Activated T-helper 2 cell treated with anti-CD3 and anti-CD28 coated beads, Interferon-gamma antibody, Interleukin-2, Interleukin-4, amounts not matched to agents 10 μg/mL and 5 μg/mL and 100 μg/mL, durations not matched to agents 14 hours and 24 hours and 36 hours (primary cell): ENCODE measurements at regions of chr6 and their contacts with region 1.

Region 1: DNA sequence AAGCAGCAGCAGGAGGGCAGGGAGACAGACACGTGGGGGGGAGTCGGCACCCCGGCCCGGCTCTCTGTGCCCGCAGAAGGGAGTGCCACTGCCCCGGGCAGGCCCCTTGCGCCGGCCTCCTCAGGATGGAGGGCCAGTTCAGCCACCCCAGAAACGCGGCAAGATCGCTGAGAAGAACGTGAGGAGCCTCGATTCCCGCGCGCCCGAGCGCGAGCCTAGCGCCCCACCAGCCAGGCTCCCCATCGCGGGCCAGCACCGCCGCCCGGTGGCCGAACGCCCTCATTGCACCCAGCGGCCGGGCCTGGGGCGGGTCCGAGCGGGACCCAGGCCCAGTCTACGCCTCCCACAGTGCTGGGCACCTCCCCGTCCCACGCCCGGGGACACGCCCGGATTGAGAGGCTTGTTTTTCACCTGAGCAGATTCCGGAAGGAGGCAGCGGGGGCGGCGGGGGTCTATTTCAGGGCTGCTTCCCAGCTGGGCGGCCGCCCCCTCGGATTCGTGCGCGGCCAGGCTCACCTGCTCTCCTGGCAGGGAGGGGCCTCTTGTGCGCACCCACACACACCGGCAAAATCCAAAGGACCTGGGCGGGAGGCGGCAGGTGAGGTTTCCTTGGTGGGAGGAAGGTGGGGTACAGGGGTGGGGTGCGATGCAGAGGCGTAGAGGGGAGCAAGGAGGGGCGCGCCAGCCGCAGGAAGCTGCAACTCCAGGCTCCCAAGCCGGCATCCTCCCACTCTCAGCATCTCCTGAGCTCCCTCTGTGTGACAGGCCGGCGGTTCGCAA is 9.0 kb upstream of the GRM4 start:
- DNase-seq: peak; percentile 44
- H3K4me3 Mint-ChIP-seq: no peak overlapping the region
- H3K27ac Mint-ChIP-seq: no peak overlapping the region
- H3K4me1 Mint-ChIP-seq: no peaks in the 10 kb centered on the region
- H3K27me3 Mint-ChIP-seq: peaks cover 60% of the 10 kb centered on the region

Region 2: GRCh38 chr6:33579828-33580714 is 574.8 kb before region 1 on chr6 and contains the start of gene BAK1:
- intact Hi-C with region 1: no loop called
- DNase-seq: peak; percentile 81
- H3K4me3 Mint-ChIP-seq: peak within 1 kb of the TSS; percentile 96
- H3K27ac Mint-ChIP-seq: peak within 1 kb of the TSS; percentile 99
- H3K4me1 Mint-ChIP-seq: peaks cover 20% of the 10 kb centered on the region
- H3K27me3 Mint-ChIP-seq: no peaks in the 10 kb centered on the region
- total RNA-seq, gene BAK1: 53.2 and 53.4 TPM in 2 replicates

Region 3: GRCh38 chr6:34055223-34055933 is 99.5 kb before region 1 on chr6:
- intact Hi-C with region 1: loop called (anchors 2 kb)
- DNase-seq: peak; percentile 30
- H3K4me3 Mint-ChIP-seq: no peak overlapping the region
- H3K27ac Mint-ChIP-seq: no peak overlapping the region
- H3K4me1 Mint-ChIP-seq: no peaks in the 10 kb centered on the region
- H3K27me3 Mint-ChIP-seq: no peaks in the 10 kb centered on the region

Region 4: DNA sequence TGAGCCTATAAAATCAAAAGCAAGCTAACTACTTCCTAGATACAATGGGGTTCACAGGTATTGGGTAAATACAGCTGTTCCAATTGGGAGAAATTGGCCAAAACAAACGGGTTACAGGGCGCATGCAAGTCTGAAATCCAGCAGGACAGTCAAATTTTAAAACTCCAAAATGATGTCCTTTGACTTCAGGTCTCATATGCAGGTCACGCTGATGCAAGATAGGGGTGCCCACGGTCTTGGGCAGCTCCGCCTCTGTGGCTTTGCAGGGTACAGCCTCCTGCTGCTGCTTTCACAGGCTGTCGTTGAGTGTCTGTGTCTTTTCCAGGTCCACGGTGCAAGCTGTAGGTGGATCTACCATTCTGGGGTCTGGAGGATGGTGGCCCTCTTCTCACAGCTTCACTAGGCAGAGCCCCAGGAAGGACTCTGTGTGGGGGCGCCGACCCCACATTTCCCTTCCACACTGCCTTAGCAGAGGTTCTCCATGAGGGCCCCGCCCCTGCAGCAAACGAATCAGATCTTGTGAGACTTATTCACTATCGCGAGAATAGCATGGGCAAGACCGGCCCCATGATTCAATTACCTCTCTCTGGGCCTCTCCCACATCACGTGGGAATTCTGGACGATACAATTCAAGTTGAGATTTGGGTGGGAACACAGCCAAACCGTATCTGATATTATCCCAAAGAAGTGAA is 105.9 kb after region 1 on chr6:
- intact Hi-C with region 1: no loop called
- DNase-seq: no peak
- H3K4me3 Mint-ChIP-seq: no peak overlapping the region
- H3K27ac Mint-ChIP-seq: no peak overlapping the region
- H3K4me1 Mint-ChIP-seq: no peaks in the 10 kb centered on the region
- H3K27me3 Mint-ChIP-seq: peaks cover 3% of the 10 kb centered on the region

Region 5: GRCh38 chr6:35259194-35259947 is 1104.5 kb after region 1 on chr6 and contains the start of gene ZNF76:
- intact Hi-C with region 1: no loop called
- DNase-seq: peak; percentile 87
- H3K4me3 Mint-ChIP-seq: peak within 1 kb of the TSS; percentile 92
- H3K27ac Mint-ChIP-seq: peak within 1 kb of the TSS; percentile 89
- H3K4me1 Mint-ChIP-seq: peaks cover 33% of the 10 kb centered on the region
- H3K27me3 Mint-ChIP-seq: no peaks in the 10 kb centered on the region
- total RNA-seq, gene ZNF76: 37.5 and 39.8 TPM in 2 replicates